IMR-90 (cell line): ENCODE measurements at regions of chr14 and their contacts with region 1.

Region 1: DNA sequence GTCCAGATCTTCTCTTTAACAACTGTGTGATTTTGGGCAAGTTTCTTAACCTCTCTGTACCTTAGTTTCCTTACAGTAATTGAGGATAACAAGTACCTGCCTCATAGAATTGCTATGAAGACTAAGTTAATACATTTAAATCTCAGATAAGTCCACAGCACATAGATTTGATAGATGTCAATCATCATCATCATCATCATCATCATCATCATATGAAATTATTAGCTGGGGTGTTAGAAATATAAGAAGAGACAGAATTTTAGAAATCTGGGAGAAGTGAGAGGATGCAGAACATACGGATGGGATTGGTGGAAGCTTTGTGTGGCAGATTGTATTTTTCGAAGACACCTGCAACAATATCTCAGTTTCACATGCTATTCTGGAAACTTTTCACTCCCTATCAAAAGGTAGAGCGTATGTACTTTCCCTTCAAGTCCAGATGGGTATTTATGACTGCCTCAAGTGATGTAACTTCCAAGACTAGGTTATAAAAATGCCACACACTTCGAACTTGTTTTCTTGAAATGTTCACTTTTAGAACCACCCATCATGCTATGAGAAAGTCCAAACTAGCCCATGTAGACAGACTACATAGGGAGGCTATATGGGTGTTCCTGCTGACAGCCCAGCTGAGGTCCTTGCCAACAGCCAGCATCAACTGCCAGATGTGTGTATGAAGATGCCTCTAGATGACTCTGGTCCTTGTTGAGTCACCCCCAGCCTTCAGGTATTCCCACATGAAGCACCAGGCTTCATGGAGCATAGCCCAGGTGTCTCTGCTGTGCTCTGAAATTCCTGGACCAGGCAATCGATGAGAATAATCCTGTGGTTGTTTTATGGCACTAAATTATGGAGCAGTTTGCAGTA is 20.7 kb upstream of the SDR39U1 start:
- DNase-seq: no peak
- ATAC-seq: no peak
- H3K4me3 ChIP-seq: no peak overlapping the region
- H3K27ac ChIP-seq: no peak overlapping the region
- H3K4me1 ChIP-seq: no peaks in the 10 kb centered on the region
- H3K27me3 ChIP-seq: no peaks in the 10 kb centered on the region
- CTCF ChIP-seq: no peak
- POLR2A ChIP-seq: no peak
- RAD21 ChIP-seq: no peak

Region 2: GRCh38 chr14:24612196-24612595 is 148.9 kb after region 1 on chr14:
- CTCF ChIA-PET with region 1: no interaction called
- POLR2A ChIA-PET with region 1: no interaction called
- dilution Hi-C with region 1: no loop called
- in situ Hi-C with region 1: no loop called
- intact Hi-C with region 1: no loop called
- DNase-seq: no peak
- ATAC-seq: no peak
- H3K4me3 ChIP-seq: no peak overlapping the region
- H3K27ac ChIP-seq: no peak overlapping the region
- H3K4me1 ChIP-seq: no peaks in the 10 kb centered on the region
- H3K27me3 ChIP-seq: no peaks in the 10 kb centered on the region
- CTCF ChIP-seq: no peak
- POLR2A ChIP-seq: no peak
- RAD21 ChIP-seq: no peak

Region 3: DNA sequence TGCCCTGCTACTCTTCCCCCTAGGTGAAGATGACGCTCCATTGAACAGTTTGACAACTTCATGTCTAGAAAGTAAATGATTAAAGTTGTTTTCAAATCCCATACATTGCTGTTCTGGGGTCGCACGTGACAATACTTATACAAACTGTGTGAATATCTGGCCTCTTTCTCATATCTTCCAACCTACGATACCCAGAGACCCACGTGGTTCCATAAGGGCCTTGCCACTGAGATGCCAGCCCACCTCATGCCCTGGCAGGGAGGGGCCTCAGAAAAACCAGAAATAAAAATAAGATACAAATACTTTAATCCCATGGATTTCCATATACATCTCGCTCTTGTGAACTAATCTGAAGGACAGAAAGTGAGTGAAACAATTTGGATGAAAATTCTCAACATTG is 166.3 kb after region 1 on chr14:
- CTCF ChIA-PET with region 1: no interaction called
- POLR2A ChIA-PET with region 1: no interaction called
- dilution Hi-C with region 1: no loop called
- in situ Hi-C with region 1: no loop called
- intact Hi-C with region 1: loop called (anchors 10 kb)
- DNase-seq: no peak
- ATAC-seq: no peak
- H3K4me3 ChIP-seq: no peak overlapping the region
- H3K27ac ChIP-seq: no peak overlapping the region
- H3K4me1 ChIP-seq: no peaks in the 10 kb centered on the region
- H3K27me3 ChIP-seq: no peaks in the 10 kb centered on the region
- CTCF ChIP-seq: no peak
- POLR2A ChIP-seq: no peak
- RAD21 ChIP-seq: no peak